Left lung (tissue), 14 donors: ENCODE measurements at regions of chr1 and their contacts with region 1.

Region 1: GRCh38 chr1:26279456-26280332 is at the start of gene SH3BGRL3:
- DNase-seq: peak; percentile 82 to 97 (median 90)
- ATAC-seq: peak; percentile 85
- H3K4me3 ChIP-seq: peak within 1 kb of the TSS; percentile 70 to 98
- H3K27ac ChIP-seq: peak within 1 kb of the TSS; percentile 94 to 98
- H3K4me1 ChIP-seq: peaks cover 56 to 91% of the 10 kb centered on the region in 2 donors
- H3K27me3 ChIP-seq: no peaks in the 10 kb centered on the region
- CTCF ChIP-seq: peak in 1 of 2 donors; percentile 21
- polyA plus RNA-seq, gene SH3BGRL3: 90.4 to 120 (median 106) TPM

Region 2: DNA sequence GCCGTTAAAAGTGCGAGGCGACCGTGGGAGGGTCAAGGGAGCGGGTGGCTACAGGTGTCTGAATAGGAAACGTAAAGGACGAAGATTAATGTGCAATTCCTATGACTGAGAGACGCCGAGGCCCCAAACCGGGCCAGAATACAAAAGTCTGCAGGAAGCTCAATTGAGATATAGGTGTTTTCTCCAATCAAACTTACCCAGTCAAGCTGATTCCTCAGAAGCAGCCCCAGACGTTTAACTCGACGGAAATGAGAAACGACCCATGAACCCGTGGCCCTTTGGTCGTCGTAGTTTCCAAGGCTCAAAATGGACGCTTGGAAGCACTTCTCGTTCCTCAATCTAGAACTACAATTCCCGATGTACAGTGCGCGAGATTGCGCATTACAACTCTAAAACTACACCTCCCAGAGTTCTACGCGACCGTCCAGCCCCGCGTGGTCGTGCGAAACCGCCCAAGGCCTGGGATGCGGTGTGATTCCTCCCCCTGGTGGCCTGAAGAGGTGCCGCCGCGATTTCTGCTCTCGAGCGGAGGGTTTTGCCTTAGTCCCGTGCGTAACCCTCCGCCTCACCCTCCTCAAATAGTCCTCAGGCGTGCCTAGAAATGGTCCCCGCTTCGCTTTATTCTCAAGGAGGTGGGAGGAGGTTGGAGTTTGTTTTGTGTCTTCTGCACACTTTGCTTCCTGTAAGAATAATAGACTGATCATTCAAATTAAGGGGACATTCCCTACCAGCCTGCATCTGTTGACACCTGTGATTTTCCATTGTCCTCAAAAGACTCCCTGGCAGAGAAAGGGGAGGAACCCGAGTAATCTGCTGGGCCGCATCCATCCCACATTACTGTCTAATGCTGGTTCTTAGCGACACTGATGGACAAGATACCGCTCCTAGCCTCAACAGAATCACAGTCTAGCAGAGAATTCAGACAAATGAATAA is 281.6 kb before region 1 on chr1 and contains the start of gene PAFAH2:
- intact Hi-C with region 1: no loop called
- DNase-seq: peak; percentile 97 to 99 (median 98)
- ATAC-seq: peak; percentile 99
- H3K4me3 ChIP-seq: peak within 1 kb of the TSS; percentile 58 to 67
- H3K27ac ChIP-seq: peak within 1 kb of the TSS; percentile 84 to 94
- H3K4me1 ChIP-seq: peaks cover 6 to 22% of the 10 kb centered on the region in 2 donors
- H3K27me3 ChIP-seq: no peaks in the 10 kb centered on the region
- CTCF ChIP-seq: peak; percentile 91 to 98
- polyA plus RNA-seq, gene PAFAH2: 11.7 to 17.5 (median 12.9) TPM

Region 3: GRCh38 chr1:26321315-26322041 is 41.8 kb after region 1 on chr1:
- intact Hi-C with region 1: loop called in 1 of 2 experiments (anchors 5 kb)
- DNase-seq: peak; percentile 76 to 95 (median 88)
- ATAC-seq: peak; percentile 96
- H3K4me3 ChIP-seq: no peak overlapping the region
- H3K27ac ChIP-seq: no peak overlapping the region
- H3K4me1 ChIP-seq: peaks cover 0 to 56% of the 10 kb centered on the region in 2 donors
- H3K27me3 ChIP-seq: peaks cover 0 to 5% of the 10 kb centered on the region in 2 donors
- CTCF ChIP-seq: peak; percentile 86 to 95

Region 4: GRCh38 chr1:26391450-26391849 is 111.8 kb after region 1 on chr1:
- intact Hi-C with region 1: no loop called
- DNase-seq: no peak
- ATAC-seq: peak; percentile 40
- H3K4me3 ChIP-seq: no peak overlapping the region
- H3K27ac ChIP-seq: no peak overlapping the region
- H3K4me1 ChIP-seq: no peaks in the 10 kb centered on the region
- H3K27me3 ChIP-seq: peaks cover 0 to 19% of the 10 kb centered on the region in 2 donors
- CTCF ChIP-seq: peak; percentile 19 to 30